ENCODE measurements at regions of chr2 and their contacts with region 1.

Region 1: GRCh38 chr2:197499594-197500526 is at the starts of genes HSPD1 and HSPE1:
- DNase-seq: peak; percentile 99
- ATAC-seq: peak; percentile 99
- H3K4me3 ChIP-seq: peak within 1 kb of the TSS; percentile 72 to 93
- H3K27ac ChIP-seq: peak within 1 kb of the TSS; percentile 84 to 92
- H3K4me1 ChIP-seq: no peaks in the 10 kb centered on the region
- H3K27me3 ChIP-seq: no peaks in the 10 kb centered on the region
- total RNA-seq, gene HSPD1: 115 to 149 TPM
- total RNA-seq, gene HSPE1: 46.1 to 61.2 TPM

Region 2: GRCh38 chr2:197391220-197391717 is 108.6 kb before region 1 on chr2:
- intact Hi-C with region 1: no loop called
- DNase-seq: no peak
- ATAC-seq: no peak
- H3K4me3 ChIP-seq: no peak overlapping the region
- H3K27ac ChIP-seq: no peak overlapping the region
- H3K4me1 ChIP-seq: no peaks in the 10 kb centered on the region
- H3K27me3 ChIP-seq: no peaks in the 10 kb centered on the region

Region 3: GRCh38 chr2:197416268-197416667 is 83.6 kb before region 1 on chr2:
- intact Hi-C with region 1: loop called in 1 of 2 experiments (anchors 10 kb)
- DNase-seq: no peak
- ATAC-seq: no peak
- H3K4me3 ChIP-seq: no peak overlapping the region
- H3K27ac ChIP-seq: no peak overlapping the region
- H3K4me1 ChIP-seq: no peaks in the 10 kb centered on the region
- H3K27me3 ChIP-seq: no peaks in the 10 kb centered on the region

Region 4: DNA sequence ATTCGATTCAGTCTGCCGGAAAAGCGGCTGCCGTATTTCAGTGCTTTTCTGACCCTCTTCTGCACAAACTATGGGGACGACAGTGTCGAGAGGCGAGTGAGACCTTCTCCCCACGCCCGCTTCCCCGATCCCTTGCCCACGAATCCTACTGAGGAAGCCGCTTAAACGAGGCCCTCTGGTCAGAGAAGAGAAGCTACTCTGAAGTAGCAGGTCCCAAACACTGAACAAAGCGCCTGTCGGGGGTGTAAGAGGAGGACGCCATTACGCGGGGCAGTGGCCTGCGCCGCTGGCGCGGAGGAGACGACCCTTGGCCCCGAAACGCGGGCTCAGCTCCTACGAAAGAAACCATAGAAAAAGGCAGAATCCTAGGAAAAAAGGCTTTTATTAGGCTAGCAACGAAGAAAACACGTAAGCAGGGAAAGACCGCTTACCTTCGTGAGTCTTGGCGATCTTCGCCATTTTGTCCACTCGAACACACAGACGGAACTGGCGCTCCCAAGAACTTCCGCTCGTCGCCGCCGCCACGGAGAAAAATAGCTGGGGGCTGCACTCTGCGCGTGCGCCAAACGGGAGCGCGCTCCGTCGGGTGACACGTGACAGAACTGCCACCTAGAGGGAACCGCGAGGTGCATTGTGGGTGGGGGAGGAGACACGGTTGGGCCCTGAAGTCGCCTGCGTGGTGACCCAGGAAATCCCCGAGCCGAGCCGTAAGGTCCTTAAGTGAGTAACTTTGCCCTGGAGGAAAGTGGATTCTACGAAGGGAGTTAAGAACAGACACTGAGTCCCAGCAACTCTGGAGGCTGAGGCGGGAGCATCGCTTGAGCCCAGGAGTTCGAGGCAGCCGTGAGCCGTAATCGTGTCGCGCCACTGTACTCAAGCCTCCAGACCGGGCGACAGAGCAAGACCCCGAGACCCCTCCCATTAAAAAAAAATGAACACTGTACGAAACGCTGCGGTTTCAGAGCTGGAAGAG is 65.0 kb before region 1 on chr2 and contains the start of gene SF3B1:
- intact Hi-C with region 1: loop called in 1 of 2 experiments (anchors 5 kb)
- DNase-seq: peak; percentile 99
- ATAC-seq: peak; percentile 100
- H3K4me3 ChIP-seq: peak within 1 kb of the TSS; percentile 82 to 100
- H3K27ac ChIP-seq: peak within 1 kb of the TSS; percentile 97 to 99
- H3K4me1 ChIP-seq: peaks cover 2 to 8% of the 10 kb centered on the region in 2 donors
- H3K27me3 ChIP-seq: no peaks in the 10 kb centered on the region
- total RNA-seq, gene SF3B1: 281 to 337 TPM

Region 5: DNA sequence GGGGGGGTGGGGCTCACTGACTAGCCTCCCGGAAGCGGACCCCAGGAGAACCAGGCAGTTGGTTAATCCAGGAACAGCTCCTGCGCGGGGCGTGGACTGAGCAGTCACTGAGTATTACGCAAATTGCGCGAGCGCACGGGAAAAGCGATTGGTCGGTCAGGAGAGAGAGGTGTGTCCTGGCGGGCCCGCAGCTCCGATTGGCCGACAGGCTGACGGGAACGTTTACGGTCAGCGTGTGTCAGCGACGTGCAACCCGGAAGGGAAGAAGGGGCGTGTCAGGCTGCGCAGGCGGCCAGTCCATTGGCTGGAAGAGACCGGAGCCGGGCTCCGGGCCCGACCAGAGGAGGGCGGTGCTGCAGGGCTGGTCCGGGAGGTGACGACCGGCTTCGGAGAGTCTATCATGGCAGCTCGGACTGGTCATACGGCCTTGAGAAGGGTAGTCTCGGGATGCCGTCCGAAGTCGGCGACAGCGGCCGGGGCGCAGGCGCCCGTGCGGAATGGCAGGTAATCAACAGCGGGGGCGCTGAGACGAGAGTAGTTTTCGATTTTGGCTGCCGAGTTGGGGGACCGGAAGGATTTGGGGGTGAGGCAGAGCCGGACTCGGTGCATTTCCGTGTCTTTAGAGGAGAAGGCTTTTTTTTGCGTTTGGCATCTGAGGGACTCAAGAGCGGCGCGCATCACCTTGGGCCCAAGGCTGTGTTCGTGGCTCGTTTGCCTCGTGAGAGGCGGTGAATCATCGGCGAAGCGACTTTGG is 46.5 kb before region 1 on chr2 and contains the start of gene COQ10B:
- intact Hi-C with region 1: loop called (anchors 1 to 5 kb)
- DNase-seq: peak; percentile 100
- ATAC-seq: peak; percentile 99
- H3K4me3 ChIP-seq: peak within 1 kb of the TSS; percentile 53 to 75
- H3K27ac ChIP-seq: peak within 1 kb of the TSS; percentile 77 to 94
- H3K4me1 ChIP-seq: no peaks in the 10 kb centered on the region
- H3K27me3 ChIP-seq: no peaks in the 10 kb centered on the region
- total RNA-seq, gene COQ10B: 26.0 to 39.8 TPM

Region 6: DNA sequence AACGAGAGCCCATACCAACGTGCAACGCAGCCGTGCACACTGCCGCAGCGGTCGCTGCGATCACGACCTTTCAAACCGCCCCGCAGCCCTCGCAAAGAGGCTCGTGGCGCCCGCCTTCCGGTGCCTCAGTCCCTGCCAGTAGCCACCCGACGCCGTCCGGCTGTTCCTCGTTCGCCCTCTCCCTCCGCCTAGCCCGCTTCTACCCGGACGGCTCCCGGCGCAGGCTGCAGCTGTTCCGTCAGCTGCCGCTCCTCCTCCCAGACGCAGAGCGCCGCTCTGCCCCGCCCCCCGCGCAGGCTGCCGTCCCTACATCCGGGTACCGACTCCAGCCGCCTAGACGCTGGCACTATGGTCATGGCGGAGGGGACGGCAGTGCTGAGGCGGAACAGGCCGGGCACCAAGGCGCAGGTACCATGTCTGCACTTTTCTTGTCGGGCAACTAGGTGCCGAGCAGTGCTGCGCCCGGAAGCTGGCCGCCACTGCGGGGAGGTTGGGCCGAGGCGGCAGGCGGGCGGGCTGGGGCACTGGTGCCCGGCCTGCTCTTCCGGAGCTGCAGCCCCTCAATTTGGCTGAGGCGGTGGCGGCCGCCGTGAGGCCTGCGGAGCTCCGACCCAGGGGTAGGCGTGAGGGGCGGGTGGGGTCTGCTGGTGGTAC is 16.0 kb after region 1 on chr2 and contains the start of gene MOB4:
- intact Hi-C with region 1: loop called in 1 of 2 experiments (anchors 1 kb)
- DNase-seq: peak; percentile 97 to 99
- ATAC-seq: peak; percentile 100
- H3K4me3 ChIP-seq: peak within 1 kb of the TSS; percentile 67 to 75
- H3K27ac ChIP-seq: peak within 1 kb of the TSS; percentile 84 to 94
- H3K4me1 ChIP-seq: no peaks in the 10 kb centered on the region
- H3K27me3 ChIP-seq: no peaks in the 10 kb centered on the region
- total RNA-seq, gene MOB4: 24.9 to 36.1 TPM

Region 7: DNA sequence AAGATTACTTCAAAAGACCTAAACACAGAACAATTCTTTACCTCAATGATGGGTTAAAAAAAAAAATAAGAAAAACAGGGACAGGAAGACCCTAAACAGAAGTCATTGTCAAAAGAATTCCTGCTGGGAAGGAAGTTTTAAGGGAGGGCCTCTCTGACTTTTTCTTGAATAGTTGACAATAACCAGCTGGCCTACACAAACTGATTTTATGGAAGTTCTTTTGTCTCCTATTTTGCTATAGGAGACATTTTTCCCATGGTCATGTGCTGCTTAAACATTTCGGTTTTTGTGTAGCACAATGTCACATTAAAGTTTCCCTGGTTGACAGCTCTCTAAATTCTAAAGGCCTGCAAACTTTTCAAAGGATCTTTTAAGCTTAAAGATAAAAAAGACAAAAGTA is 120.3 kb after region 1 on chr2:
- intact Hi-C with region 1: no loop called
- DNase-seq: no peak
- ATAC-seq: no peak
- H3K4me3 ChIP-seq: no peak overlapping the region
- H3K27ac ChIP-seq: no peak overlapping the region
- H3K4me1 ChIP-seq: no peaks in the 10 kb centered on the region
- H3K27me3 ChIP-seq: no peaks in the 10 kb centered on the region

Region 8: GRCh38 chr2:197705121-197705911 is 205.5 kb after region 1 on chr2 and contains the start of gene MARS2:
- intact Hi-C with region 1: loop called in 1 of 2 experiments (anchors 5 kb)
- DNase-seq: peak; percentile 96 to 98
- ATAC-seq: peak; percentile 98
- H3K4me3 ChIP-seq: peak within 1 kb of the TSS; percentile 72 to 80
- H3K27ac ChIP-seq: peak within 1 kb of the TSS; percentile 21 to 55
- H3K4me1 ChIP-seq: peaks cover 0 to 5% of the 10 kb centered on the region in 2 donors
- H3K27me3 ChIP-seq: no peaks in the 10 kb centered on the region
- total RNA-seq, gene MARS2: 3.6 to 3.7 TPM